Endothelial cell of umbilical vein (primary cell): ENCODE measurements at regions of chr1 and their contacts with region 1.

Region 1: GRCh38 chr1:26999440-26999987 is 6.0 kb downstream of the TRNP1 start:
- DNase-seq: peak; percentile 45
- H3K4me3 ChIP-seq: no peak overlapping the region
- H3K27ac ChIP-seq: peak overlapping the region; percentile 70
- H3K4me1 ChIP-seq: peaks cover 27% of the 10 kb centered on the region
- H3K27me3 ChIP-seq: no peaks in the 10 kb centered on the region
- CTCF ChIP-seq: no peak
- POLR2A ChIP-seq: no peak

Region 2: GRCh38 chr1:26961826-26962225 is 37.7 kb before region 1 on chr1:
- CTCF ChIA-PET with region 1: interaction called, 109 read pairs
- POLR2A ChIA-PET with region 1: interaction called, 3 read pairs
- dilution Hi-C with region 1: no loop called
- intact Hi-C with region 1: loop called (anchors 1 kb)
- DNase-seq: peak; percentile 70
- H3K4me3 ChIP-seq: no peak overlapping the region
- H3K27ac ChIP-seq: no peak overlapping the region
- H3K4me1 ChIP-seq: peaks cover 16% of the 10 kb centered on the region
- H3K27me3 ChIP-seq: peaks cover 22 to 24% of the 10 kb centered on the region in 2 experiments
- CTCF ChIP-seq: no peak
- POLR2A ChIP-seq: no peak

Region 3: GRCh38 chr1:27031235-27032118 is 32.0 kb after region 1 on chr1:
- CTCF ChIA-PET with region 1: interaction called, 13 read pairs
- POLR2A ChIA-PET with region 1: no interaction called
- dilution Hi-C with region 1: no loop called
- intact Hi-C with region 1: loop called (anchors 1 kb)
- DNase-seq: peak; percentile 87
- H3K4me3 ChIP-seq: peak overlapping the region in 1 of 3 experiments; percentile 23
- H3K27ac ChIP-seq: no peak overlapping the region
- H3K4me1 ChIP-seq: peaks cover 20% of the 10 kb centered on the region
- H3K27me3 ChIP-seq: peaks cover 0 to 2% of the 10 kb centered on the region in 2 experiments
- CTCF ChIP-seq: no peak
- POLR2A ChIP-seq: no peak

Region 4: GRCh38 chr1:27057801-27058625 is 58.5 kb after region 1 on chr1:
- CTCF ChIA-PET with region 1: interaction called, 10 read pairs
- POLR2A ChIA-PET with region 1: no interaction called
- dilution Hi-C with region 1: no loop called
- intact Hi-C with region 1: no loop called
- DNase-seq: no peak
- H3K4me3 ChIP-seq: no peak overlapping the region
- H3K27ac ChIP-seq: no peak overlapping the region
- H3K4me1 ChIP-seq: no peaks in the 10 kb centered on the region
- H3K27me3 ChIP-seq: peaks cover 6 to 10% of the 10 kb centered on the region in 2 experiments
- CTCF ChIP-seq: no peak
- POLR2A ChIP-seq: no peak

Region 5: DNA sequence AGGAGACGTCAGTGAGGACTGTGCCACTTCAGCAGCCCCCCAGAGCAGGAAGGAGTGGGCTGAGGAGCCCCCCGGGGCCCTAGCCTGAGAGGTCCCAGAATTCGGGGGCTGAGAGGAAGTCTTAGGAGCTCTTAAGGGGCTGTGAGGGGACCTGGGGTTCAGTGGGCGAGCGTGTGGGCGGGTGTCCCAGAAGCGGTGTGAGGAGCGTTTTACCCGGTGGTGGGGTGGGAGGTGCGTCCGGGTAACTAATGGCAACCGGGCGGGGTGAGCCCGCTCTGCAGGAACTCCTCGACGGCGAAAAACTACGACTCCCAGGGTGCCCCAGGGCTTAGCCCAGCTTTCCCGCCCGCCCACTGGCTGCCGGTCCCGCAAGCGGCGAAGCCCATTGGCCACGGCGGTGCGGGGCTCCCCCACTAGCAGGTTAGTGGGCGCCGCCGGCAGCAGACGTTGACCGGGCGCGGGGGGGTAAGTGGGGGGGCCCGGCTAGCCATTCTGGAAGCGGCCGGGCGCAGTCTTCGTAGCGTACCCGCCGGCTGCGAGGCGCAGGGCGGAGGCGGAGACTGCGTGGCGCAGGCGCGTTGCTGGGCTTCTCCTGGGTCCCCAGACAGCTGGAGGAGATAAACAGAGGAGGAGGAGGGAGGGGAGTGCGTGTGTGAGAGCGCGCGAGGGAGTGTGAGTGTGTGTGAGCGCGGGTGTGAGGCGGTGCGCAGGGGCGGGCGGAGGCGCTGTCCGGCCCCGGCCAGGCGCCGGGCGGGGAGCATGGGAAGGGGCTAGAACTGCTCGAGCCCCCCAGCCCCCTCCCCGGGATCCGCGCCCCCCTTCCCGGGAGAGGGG is 234.8 kb after region 1 on chr1 and contains the start of gene WDTC1:
- CTCF ChIA-PET with region 1: no interaction called
- POLR2A ChIA-PET with region 1: no interaction called
- dilution Hi-C with region 1: no loop called
- intact Hi-C with region 1: loop called (anchors 5 kb)
- DNase-seq: peak; percentile 98
- H3K4me3 ChIP-seq: peak within 1 kb of the TSS; percentile 61 to 87 (median 76)
- H3K27ac ChIP-seq: no peak within 1 kb of the TSS
- H3K4me1 ChIP-seq: peaks cover 12% of the 10 kb centered on the region
- H3K27me3 ChIP-seq: no peaks in the 10 kb centered on the region
- CTCF ChIP-seq: no peak
- POLR2A ChIP-seq: peak; percentile 28
- total RNA-seq, gene WDTC1: 27.3 and 27.6 TPM in 2 replicates